Activated naive CD4-positive, alpha-beta T cell treated with anti-CD3 and anti-CD28 coated beads for 36 hours (primary cell): ENCODE measurements at regions of chr1 and their contacts with region 1.

Region 1: GRCh38 chr1:205775015-205775716 is at the start of gene RAB29:
- DNase-seq: peak; percentile 93
- H3K4me3 Mint-ChIP-seq: peak within 1 kb of the TSS; percentile 83
- H3K27ac Mint-ChIP-seq: peak within 1 kb of the TSS; percentile 94
- H3K4me1 Mint-ChIP-seq: peaks cover 53% of the 10 kb centered on the region
- H3K27me3 Mint-ChIP-seq: no peaks in the 10 kb centered on the region
- total RNA-seq, gene RAB29: 25.0 TPM

Region 2: DNA sequence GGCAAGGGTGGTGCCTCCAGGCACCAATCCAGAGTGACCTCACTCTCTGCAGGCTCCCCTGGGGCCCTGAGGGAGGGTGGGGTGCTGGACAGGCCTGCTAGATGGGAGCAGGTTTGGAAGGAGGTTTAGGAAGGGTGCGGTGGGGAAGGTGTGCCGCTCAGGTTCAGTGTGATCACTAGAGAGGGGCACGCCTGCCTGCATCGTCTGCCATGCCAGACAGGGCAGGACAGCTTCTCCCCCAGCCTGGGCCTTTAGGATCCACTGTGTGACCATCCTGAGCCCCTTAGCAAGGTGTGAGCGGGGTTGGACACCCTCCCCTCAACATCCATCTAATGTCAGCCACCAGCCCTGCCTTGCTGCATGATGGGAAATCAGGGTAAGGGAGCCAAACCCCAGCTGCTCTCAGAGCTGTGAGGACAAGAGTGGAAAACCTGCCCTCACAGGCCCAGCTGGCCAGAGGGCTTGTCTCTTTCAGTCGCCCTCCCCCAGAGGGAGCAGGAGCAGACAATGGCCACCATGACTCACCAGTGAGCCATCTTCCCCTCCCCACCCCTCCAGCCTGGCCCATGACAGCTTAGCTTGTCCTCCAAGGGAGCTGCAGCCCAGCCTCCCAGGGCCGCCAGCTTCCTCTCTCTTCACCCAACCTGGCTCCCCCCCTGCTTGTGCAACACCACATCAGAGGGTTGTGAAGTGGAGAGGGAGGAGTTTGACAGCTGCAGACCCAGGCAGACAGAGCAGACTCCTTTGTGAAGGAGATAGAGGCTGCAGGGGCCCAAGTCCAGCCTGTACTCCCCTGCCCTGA is 490.6 kb before region 1 on chr1:
- CTCF ChIA-PET with region 1: no interaction called
- intact Hi-C with region 1: loop called (anchors 10 kb)
- DNase-seq: peak; percentile 97
- H3K4me3 Mint-ChIP-seq: peak overlapping the region; percentile 29
- H3K27ac Mint-ChIP-seq: peak overlapping the region; percentile 87
- H3K4me1 Mint-ChIP-seq: peaks cover 77% of the 10 kb centered on the region
- H3K27me3 Mint-ChIP-seq: no peaks in the 10 kb centered on the region

Region 3: GRCh38 chr1:205591522-205592351 is 183.4 kb before region 1 on chr1:
- CTCF ChIA-PET with region 1: interaction called, 3 read pairs
- intact Hi-C with region 1: loop called (anchors 5 kb)
- DNase-seq: peak; percentile 96
- H3K4me3 Mint-ChIP-seq: peak overlapping the region; percentile 88
- H3K27ac Mint-ChIP-seq: peak overlapping the region; percentile 90
- H3K4me1 Mint-ChIP-seq: peaks cover 48% of the 10 kb centered on the region
- H3K27me3 Mint-ChIP-seq: no peaks in the 10 kb centered on the region

Region 4: DNA sequence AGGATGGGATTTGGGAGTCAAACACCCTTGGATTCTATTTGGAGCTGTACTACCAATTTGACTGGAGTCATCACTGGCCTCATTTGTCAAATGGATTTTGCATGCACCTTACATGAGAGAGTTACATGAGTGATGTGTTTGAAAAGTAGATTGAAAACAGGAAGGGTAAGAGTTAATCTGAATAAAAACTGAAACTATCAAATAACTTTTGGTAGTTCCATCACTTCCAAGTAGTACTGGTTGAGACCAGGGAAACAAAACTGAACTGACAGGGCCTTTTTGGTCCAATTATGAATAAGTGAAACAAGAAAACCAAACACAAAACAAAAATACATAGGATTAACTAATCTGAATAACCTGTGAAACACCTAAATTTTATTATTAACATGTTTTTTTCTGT is 55.4 kb before region 1 on chr1:
- CTCF ChIA-PET with region 1: interaction called, 5 read pairs
- intact Hi-C with region 1: loop called (anchors 1 kb)
- DNase-seq: no peak
- H3K4me3 Mint-ChIP-seq: no peak overlapping the region
- H3K27ac Mint-ChIP-seq: peak overlapping the region; percentile 67
- H3K4me1 Mint-ChIP-seq: peaks cover 42% of the 10 kb centered on the region
- H3K27me3 Mint-ChIP-seq: no peaks in the 10 kb centered on the region

Region 5: GRCh38 chr1:205763980-205764379 is 11.2 kb before region 1 on chr1:
- CTCF ChIA-PET with region 1: interaction called, 6 read pairs
- intact Hi-C with region 1: loop called (anchors 1 kb)
- DNase-seq: no peak
- H3K4me3 Mint-ChIP-seq: no peak overlapping the region
- H3K27ac Mint-ChIP-seq: peak overlapping the region; percentile 73
- H3K4me1 Mint-ChIP-seq: peaks cover 26% of the 10 kb centered on the region
- H3K27me3 Mint-ChIP-seq: no peaks in the 10 kb centered on the region

Region 6: GRCh38 chr1:205812878-205813754 is 38.0 kb after region 1 on chr1 and contains the start of gene SLC41A1:
- CTCF ChIA-PET with region 1: no interaction called
- intact Hi-C with region 1: loop called (anchors 1 kb)
- DNase-seq: peak; percentile 95
- H3K4me3 Mint-ChIP-seq: peak within 1 kb of the TSS; percentile 89
- H3K27ac Mint-ChIP-seq: peak within 1 kb of the TSS; percentile 74
- H3K4me1 Mint-ChIP-seq: peaks cover 49% of the 10 kb centered on the region
- H3K27me3 Mint-ChIP-seq: no peaks in the 10 kb centered on the region
- total RNA-seq, gene SLC41A1: 32.1 to 33.9 TPM